ENCODE measurements at regions of chr17 and their contacts with region 1.

Region 1: DNA sequence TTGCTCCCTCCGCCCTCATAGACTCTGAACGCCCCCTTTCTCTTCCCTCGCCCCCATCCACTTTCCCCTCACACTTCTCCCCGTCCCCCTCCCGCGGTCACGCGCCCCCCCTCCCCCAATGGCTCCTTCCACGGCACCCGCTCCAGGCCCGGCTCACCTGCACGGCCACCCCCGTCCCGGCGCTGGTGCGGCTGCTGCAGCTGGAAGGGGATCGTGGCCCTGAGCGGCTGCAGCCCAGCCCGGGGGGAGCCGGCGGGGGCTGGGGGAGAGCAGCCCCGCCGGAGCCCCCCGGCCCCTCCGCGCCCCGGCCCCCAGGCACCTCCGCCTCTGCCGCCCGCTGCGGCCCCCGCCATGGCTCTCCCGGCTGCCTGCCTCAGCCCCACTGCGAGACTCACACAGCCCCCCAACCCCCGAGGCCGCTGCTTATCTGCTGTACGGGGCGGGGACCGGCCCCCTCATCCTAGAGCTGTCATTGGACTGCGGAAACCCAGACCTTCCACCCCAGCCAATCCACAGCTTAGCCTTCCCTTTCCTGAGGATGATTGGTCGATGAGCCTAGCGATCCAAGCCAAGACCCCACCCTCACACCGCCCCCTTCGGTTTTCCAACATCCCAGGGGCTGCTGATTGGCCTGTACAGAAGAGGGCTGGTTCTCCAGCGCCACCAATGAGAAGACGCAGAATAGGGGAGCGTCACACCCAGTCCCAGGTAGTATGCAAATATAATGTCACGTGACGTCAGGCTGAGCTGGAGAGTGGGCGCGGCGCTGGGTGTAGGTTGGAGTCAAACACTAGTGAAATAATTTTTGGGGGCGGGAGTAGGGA is at the start of gene FAM117A:
- DNase-seq: peak; percentile 99
- H3K4me3 Mint-ChIP-seq: peak within 1 kb of the TSS; percentile 90
- H3K27ac Mint-ChIP-seq: peak within 1 kb of the TSS; percentile 81
- H3K4me1 Mint-ChIP-seq: peaks cover 54% of the 10 kb centered on the region
- H3K27me3 Mint-ChIP-seq: no peaks in the 10 kb centered on the region
- total RNA-seq, gene FAM117A: 20.9 to 21.6 TPM

Region 2: DNA sequence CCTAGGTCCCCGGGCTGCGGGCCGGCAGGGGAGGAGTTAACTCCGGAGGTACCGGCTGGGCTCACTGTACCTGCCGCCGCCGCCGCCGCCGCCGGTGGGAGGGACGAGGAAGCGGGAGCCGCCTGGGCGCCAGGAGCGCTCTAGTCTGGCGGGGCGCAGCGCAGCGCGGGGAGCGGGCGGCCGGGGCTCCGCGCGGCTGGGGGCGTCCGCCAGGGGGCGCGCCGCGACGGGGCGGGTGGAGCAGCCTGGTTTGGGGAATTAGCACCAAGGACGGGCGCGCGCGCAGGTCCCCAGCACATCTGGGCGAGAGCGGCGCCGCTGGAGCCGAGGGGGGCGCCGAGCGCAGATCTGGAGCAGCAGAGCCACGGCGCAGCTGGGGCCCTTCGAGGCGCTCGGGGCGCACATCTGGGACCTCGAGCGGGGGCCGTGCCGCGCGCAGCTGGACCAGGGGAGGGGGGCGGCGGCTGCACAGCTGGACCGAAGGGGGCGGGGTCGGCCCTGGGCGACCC is 188.3 kb before region 1 on chr17 and contains the start of gene NXPH3:
- CTCF ChIA-PET with region 1: no interaction called
- POLR2A ChIA-PET with region 1: no interaction called
- intact Hi-C with region 1: loop called (anchors 5 kb)
- DNase-seq: peak; percentile 80
- H3K4me3 Mint-ChIP-seq: peak within 1 kb of the TSS; percentile 63
- H3K27ac Mint-ChIP-seq: no peak within 1 kb of the TSS
- H3K4me1 Mint-ChIP-seq: peaks cover 2% of the 10 kb centered on the region
- H3K27me3 Mint-ChIP-seq: peaks cover 44% of the 10 kb centered on the region
- total RNA-seq, gene NXPH3: 0.10 TPM in 1 of 2 experiments, not detected in the other

Region 3: GRCh38 chr17:49687878-49688491 is 76.0 kb before region 1 on chr17:
- CTCF ChIA-PET with region 1: no interaction called
- POLR2A ChIA-PET with region 1: no interaction called
- intact Hi-C with region 1: no loop called
- DNase-seq: peak; percentile 31
- H3K4me3 Mint-ChIP-seq: peak overlapping the region; percentile 45
- H3K27ac Mint-ChIP-seq: peak overlapping the region; percentile 88
- H3K4me1 Mint-ChIP-seq: peaks cover 32% of the 10 kb centered on the region
- H3K27me3 Mint-ChIP-seq: no peaks in the 10 kb centered on the region

Region 4: GRCh38 chr17:49715717-49716279 is 48.1 kb before region 1 on chr17:
- CTCF ChIA-PET with region 1: interaction called, 20 read pairs
- POLR2A ChIA-PET with region 1: interaction called, 35 read pairs
- intact Hi-C with region 1: loop called (anchors 1 kb)
- DNase-seq: peak; percentile 74
- H3K4me3 Mint-ChIP-seq: peak overlapping the region; percentile 27
- H3K27ac Mint-ChIP-seq: peak overlapping the region; percentile 97
- H3K4me1 Mint-ChIP-seq: peaks cover 43% of the 10 kb centered on the region
- H3K27me3 Mint-ChIP-seq: no peaks in the 10 kb centered on the region

Region 5: GRCh38 chr17:49739641-49740271 is 24.2 kb before region 1 on chr17:
- CTCF ChIA-PET with region 1: interaction called, 5 read pairs
- POLR2A ChIA-PET with region 1: interaction called, 6 read pairs
- intact Hi-C with region 1: loop called (anchors 1 kb)
- DNase-seq: peak; percentile 92
- H3K4me3 Mint-ChIP-seq: peak overlapping the region; percentile 85
- H3K27ac Mint-ChIP-seq: peak overlapping the region; percentile 100
- H3K4me1 Mint-ChIP-seq: peaks cover 74% of the 10 kb centered on the region
- H3K27me3 Mint-ChIP-seq: no peaks in the 10 kb centered on the region

Region 6: DNA sequence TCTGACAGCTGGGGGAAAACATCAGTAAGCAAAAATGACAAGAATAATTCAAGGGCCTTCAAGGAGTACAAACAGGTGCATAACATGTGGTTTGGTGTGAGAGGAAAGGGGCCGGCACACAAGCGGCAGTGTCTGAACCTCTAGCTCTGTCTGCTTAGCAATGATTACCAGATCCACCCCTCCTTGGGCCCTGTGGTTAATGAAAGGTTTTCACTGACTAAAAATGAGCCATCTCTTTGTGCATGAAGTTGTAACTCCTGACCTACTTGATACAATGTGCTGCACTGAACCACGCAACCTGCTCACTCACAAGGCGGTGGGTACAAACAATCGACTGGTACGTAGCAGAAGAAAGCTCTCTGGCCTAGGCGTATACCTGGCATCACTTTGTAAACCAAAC is 15.2 kb before region 1 on chr17:
- CTCF ChIA-PET with region 1: interaction called, 43 read pairs
- POLR2A ChIA-PET with region 1: interaction called, 69 read pairs
- intact Hi-C with region 1: loop called (anchors 1 kb)
- DNase-seq: peak; percentile 80
- H3K4me3 Mint-ChIP-seq: peak overlapping the region; percentile 33
- H3K27ac Mint-ChIP-seq: peak overlapping the region; percentile 94
- H3K4me1 Mint-ChIP-seq: peaks cover 81% of the 10 kb centered on the region
- H3K27me3 Mint-ChIP-seq: no peaks in the 10 kb centered on the region